Spleen (tissue), 13 donors: ENCODE measurements at regions of chr7 and their contacts with region 1.

Region 1: DNA sequence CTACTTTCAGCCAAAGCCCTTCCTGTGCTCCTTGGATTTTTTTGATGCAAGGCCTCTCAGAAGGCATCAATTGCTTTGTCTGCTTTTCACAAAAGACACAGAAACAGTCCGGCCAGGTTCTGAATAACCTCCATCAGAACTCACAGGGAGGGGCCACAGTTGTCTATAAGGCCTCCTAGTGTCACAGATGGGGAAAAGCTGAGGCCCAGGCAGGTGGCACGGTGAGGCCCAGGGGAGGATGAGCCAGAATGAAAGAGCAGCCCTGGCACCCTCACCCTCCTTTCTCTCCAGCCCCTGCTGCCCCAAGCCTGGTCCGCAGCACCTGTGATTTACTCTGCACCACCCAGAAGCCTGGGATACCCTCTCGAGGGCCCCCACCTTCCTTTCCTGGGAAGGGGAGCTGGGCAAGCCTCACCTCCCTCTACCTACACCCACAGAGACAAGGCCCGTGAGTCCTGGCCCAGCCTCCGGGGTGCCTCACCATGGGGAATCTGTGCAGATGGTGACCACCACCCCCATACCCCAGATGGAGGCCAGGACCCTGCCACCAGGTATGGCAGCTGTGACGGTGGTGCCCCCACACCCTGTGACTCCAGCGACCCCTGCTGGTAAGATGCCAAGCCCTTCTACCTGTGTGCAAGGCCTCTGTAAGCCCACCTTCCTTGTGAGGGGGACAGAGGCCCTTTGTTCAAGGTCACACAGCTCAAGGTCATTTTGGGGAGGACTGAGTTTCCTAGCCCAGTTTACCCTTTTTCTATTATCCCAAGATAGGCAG is 26.2 kb upstream of the ZNF467 start:
- DNase-seq: peak; percentile 86
- H3K4me3 ChIP-seq: no peak overlapping the region
- H3K27ac ChIP-seq: no peak overlapping the region
- H3K4me1 ChIP-seq: no peaks in the 10 kb centered on the region
- H3K27me3 ChIP-seq: peaks cover 0 to 9% (median 0%) of the 10 kb centered on the region in 7 donors
- CTCF ChIP-seq: peak in 10 of 11 experiments; percentile 31 to 75 (median 60)
- POLR2A ChIP-seq: no peak

Region 2: DNA sequence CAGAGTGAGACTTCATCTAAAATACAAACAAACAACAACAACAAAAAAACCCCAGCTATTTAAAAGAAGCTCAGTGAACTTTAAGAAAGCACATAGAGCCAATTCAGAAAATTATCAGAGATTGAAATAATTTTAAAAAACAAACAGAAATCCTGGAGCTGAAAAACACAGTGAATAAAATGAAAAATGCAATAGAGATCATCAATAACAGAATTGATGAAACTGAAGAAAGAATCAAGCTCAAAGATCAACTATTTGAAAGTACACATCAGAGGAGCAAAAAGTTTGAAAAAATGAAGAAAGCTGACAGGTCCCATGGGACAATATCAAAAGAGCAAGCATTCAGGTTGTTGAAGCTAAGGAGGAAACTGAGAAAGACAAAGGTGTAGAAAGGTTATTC is 289.8 kb before region 1 on chr7:
- intact Hi-C with region 1: no loop called
- DNase-seq: no peak
- H3K4me3 ChIP-seq: no peak overlapping the region
- H3K27ac ChIP-seq: no peak overlapping the region
- H3K4me1 ChIP-seq: no peaks in the 10 kb centered on the region
- H3K27me3 ChIP-seq: no peaks in the 10 kb centered on the region
- CTCF ChIP-seq: no peak
- POLR2A ChIP-seq: no peak

Region 3: DNA sequence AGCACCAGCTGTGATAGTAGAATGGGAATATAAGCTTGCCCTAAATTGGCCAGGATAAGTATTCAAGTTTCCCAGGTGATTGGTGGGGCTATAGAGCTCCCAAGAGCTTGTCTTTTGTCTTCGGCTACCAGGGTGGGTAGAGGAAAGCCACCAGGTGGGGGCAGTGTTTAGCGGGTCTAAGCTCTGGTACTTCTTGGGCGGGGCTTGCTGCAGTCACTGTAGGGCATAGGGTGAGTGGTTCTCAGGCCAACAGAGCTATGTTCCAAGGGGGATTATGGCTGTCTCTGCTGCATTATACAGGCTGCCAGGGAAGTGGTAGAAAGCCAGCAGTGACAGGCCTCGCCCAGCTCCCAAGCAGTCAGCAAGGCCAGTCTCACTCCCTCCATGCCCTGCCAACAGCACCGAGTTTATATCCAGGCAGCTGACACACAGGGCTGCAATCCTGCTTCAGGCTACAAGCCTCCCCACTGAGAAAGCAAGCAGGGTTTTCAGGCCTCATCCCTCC is 136.9 kb before region 1 on chr7:
- intact Hi-C with region 1: loop called (anchors 10 kb)
- DNase-seq: peak; percentile 83
- H3K4me3 ChIP-seq: no peak overlapping the region
- H3K27ac ChIP-seq: no peak overlapping the region
- H3K4me1 ChIP-seq: no peaks in the 10 kb centered on the region
- H3K27me3 ChIP-seq: peaks cover 0 to 20% (median 0%) of the 10 kb centered on the region in 7 donors
- CTCF ChIP-seq: peak in 8 of 11 experiments; percentile 12 to 68 (median 51)
- POLR2A ChIP-seq: no peak